GM23248 (cell line): ENCODE measurements at regions of chr7 and their contacts with region 1.

Region 1: GRCh38 chr7:50664461-50664922 is 99.3 kb upstream of the DDC start:
- DNase-seq: peak; percentile 84
- H3K4me3 ChIP-seq: no peak overlapping the region
- H3K27ac ChIP-seq: no peak overlapping the region
- H3K4me1 ChIP-seq: peaks cover 21% of the 10 kb centered on the region
- H3K27me3 ChIP-seq: no peaks in the 10 kb centered on the region

Region 2: DNA sequence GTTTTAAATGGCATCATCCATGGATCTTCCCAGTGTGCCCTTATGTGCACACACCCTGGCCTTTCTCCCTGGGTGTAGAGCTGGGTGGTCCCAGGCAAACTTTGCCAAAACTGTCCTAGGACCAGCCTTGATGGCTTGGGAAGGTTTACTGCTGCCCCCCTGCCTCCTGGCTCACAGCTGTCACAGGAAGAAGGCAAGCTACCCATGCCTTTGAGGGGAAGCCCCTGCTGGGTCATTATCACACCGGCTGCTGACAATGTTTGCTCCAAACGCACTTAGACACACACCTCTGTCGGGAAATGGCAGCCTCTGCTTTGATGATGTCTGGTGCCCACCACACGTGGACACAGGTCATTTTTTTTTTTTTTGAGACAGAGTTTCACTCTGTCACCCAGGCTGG is 189.2 kb before region 1 on chr7:
- in situ Hi-C with region 1: loop called (anchors 10 kb)
- DNase-seq: no peak
- H3K4me3 ChIP-seq: no peak overlapping the region
- H3K27ac ChIP-seq: no peak overlapping the region
- H3K4me1 ChIP-seq: no peaks in the 10 kb centered on the region
- H3K27me3 ChIP-seq: peaks cover 12% of the 10 kb centered on the region; the same call in 1 of the 2 replicates